ENCODE measurements at regions of chr2 and their contacts with region 1.

Region 1: GRCh38 chr2:164061129-164061746 is 325.4 kb upstream of the FIGN start:
- DNase-seq: no peak
- H3K4me3 ChIP-seq: no peak overlapping the region
- H3K27ac ChIP-seq: no peak overlapping the region
- H3K4me1 ChIP-seq: no peaks in the 10 kb centered on the region
- H3K27me3 ChIP-seq: no peaks in the 10 kb centered on the region
- CTCF ChIP-seq: peak in 2 of 3 donors; percentile 49 to 66
- POLR2A ChIP-seq: no peak

Region 2: DNA sequence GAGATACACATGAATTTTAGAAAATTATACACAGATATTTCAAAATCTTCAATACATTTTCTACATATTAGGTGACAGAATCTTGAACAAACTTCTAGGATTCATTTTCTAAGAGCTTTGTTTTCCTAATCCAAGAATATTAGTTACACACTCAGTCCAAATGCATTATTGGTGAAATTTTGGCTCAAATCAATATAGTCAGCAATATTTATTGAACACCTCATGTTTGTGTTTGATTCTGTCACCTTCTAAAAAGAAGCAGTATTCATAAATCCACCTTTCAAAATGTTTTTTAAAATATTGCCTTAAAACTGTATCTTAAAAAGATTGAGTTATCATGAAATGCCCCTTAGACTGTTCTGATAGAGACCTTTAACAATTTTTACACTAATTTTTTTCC is 1262.8 kb before region 1 on chr2:
- intact Hi-C with region 1: no loop called
- DNase-seq: no peak
- H3K4me3 ChIP-seq: no peak overlapping the region
- H3K27ac ChIP-seq: no peak overlapping the region
- H3K4me1 ChIP-seq: no peaks in the 10 kb centered on the region
- H3K27me3 ChIP-seq: no peaks in the 10 kb centered on the region
- CTCF ChIP-seq: no peak
- POLR2A ChIP-seq: no peak

Region 3: DNA sequence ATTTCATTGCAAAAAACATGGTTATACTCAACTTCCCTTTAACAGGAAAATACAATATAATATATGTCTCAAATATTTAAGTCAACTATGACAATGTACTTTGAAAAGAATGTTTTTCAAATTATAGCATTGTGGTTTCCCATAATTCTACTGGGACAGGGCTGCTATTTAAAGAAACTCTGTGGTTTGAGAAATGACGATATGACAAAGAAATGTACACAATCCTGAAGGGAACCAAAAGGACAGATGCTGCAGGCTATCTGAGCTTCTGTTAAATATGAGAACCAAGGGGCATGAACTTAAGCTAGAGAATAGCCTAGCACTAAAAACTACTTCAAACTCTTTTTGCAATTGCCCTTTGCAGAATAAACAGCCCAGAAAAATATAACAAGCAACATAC is 144.1 kb after region 1 on chr2:
- intact Hi-C with region 1: no loop called
- DNase-seq: no peak
- H3K4me3 ChIP-seq: no peak overlapping the region
- H3K27ac ChIP-seq: no peak overlapping the region
- H3K4me1 ChIP-seq: no peaks in the 10 kb centered on the region
- H3K27me3 ChIP-seq: no peaks in the 10 kb centered on the region
- CTCF ChIP-seq: no peak
- POLR2A ChIP-seq: no peak

Region 4: GRCh38 chr2:164896634-164897355 is 835.6 kb after region 1 on chr2:
- intact Hi-C with region 1: loop called (anchors 10 kb)
- DNase-seq: no peak
- H3K4me3 ChIP-seq: no peak overlapping the region
- H3K27ac ChIP-seq: no peak overlapping the region
- H3K4me1 ChIP-seq: no peaks in the 10 kb centered on the region
- H3K27me3 ChIP-seq: no peaks in the 10 kb centered on the region
- CTCF ChIP-seq: no peak
- POLR2A ChIP-seq: no peak

Region 5: GRCh38 chr2:165305391-165306096 is 1244.3 kb after region 1 on chr2:
- intact Hi-C with region 1: no loop called
- DNase-seq: no peak
- H3K4me3 ChIP-seq: no peak overlapping the region
- H3K27ac ChIP-seq: no peak overlapping the region
- H3K4me1 ChIP-seq: no peaks in the 10 kb centered on the region
- H3K27me3 ChIP-seq: no peaks in the 10 kb centered on the region
- CTCF ChIP-seq: no peak
- POLR2A ChIP-seq: no peak

Measured in breast epithelium (tissue), 4 donors.